ENCODE measurements at regions of chr17 and their contacts with region 1.

Region 1: DNA sequence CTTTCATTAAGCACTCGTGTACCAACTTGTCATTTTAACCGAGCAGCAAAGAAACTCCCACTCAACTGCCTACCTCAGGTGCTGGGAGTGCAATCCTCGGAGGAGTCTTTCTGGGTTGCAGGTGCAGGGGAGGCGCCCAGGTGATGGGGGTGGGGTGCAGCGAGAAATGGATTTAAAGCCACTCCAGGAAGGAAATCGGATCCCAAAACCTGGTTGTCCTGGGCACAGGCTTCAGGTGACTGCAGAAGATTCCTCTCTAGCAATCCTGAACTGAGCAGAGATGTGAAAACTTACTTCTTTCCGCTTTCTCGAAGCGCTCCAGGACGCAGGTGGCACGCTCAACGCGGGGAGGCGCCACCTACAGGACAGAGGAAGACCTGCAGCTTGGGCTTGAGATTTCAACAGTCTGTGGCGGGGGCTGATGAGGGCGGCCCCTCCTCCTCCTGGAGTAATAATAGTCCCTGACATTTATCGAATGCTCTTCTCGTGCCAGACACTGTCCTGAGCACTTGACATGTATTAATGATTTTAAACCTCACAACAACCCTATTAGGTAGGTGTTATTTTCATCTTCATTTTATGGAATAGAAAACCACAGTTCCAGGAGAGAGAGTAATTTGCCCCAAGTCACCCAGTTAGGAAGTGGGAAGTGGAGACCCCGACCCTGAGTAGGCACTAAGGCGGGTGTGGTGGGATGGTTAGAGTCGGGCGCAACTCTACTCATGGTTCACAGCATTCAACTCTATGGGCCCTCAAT is 27.2 kb upstream of the SKAP1 start:
- DNase-seq: peak; percentile 78 to 82 (median 81)
- H3K4me3 ChIP-seq: peak overlapping the region in 1 of 2 donors; percentile 16
- H3K4me3 Mint-ChIP-seq: peak overlapping the region; percentile 64 to 86 (median 76)
- H3K27ac ChIP-seq: no peak overlapping the region
- H3K27ac Mint-ChIP-seq: peak overlapping the region in 5 of 7 donors; percentile 47 to 79 (median 69)
- H3K4me1 ChIP-seq: peaks cover 54% of the 10 kb centered on the region
- H3K4me1 Mint-ChIP-seq: peaks cover 39 to 61% (median 46%) of the 10 kb centered on the region in 4 donors
- H3K27me3 ChIP-seq: no peaks in the 10 kb centered on the region
- H3K27me3 Mint-ChIP-seq: peaks cover 0 to 1% of the 10 kb centered on the region in 2 donors

Region 2: GRCh38 chr17:48335858-48336500 is 121.3 kb before region 1 on chr17:
- CTCF ChIA-PET with region 1: interaction called, 7 read pairs
- POLR2A ChIA-PET with region 1: interaction called, 5 read pairs
- intact Hi-C with region 1: loop called (anchors 1 kb)
- DNase-seq: peak in 4 of 5 donors; percentile 61 to 70 (median 66)
- H3K4me3 ChIP-seq: no peak overlapping the region
- H3K4me3 Mint-ChIP-seq: no peak overlapping the region
- H3K27ac ChIP-seq: no peak overlapping the region
- H3K27ac Mint-ChIP-seq: peak overlapping the region in 2 of 7 donors; percentile 63 to 65
- H3K4me1 ChIP-seq: no peaks in the 10 kb centered on the region
- H3K4me1 Mint-ChIP-seq: peaks cover 0 to 11% (median 4%) of the 10 kb centered on the region in 4 donors
- H3K27me3 ChIP-seq: no peaks in the 10 kb centered on the region
- H3K27me3 Mint-ChIP-seq: no peaks in the 10 kb centered on the region

Region 3: DNA sequence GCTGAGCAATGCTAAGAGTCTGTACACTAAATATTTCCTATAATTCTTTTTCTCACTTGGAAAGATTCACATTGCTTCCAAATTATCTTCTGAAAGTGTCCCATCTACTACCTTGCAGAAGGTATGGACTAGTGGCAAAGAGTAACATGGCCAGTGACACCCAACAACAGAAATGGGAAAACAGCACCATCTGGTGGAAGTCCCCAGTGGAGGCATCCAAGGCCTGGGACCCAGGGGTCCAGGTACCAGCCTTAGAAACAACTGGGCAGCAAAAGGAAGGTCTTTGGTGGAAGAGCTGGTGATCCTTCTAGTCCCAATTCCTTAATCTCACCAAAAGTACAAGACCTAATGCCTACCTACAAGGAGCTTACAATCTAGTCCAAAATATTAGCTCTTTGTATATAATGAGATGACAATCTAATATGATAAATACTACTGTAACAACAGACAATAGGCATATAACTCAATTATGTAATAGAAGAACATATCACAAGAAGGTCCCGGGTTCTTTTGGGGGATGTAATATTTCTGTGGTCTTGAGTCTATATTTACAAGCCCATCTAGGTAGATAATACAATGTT is 82.5 kb before region 1 on chr17:
- CTCF ChIA-PET with region 1: interaction called, 7 read pairs
- POLR2A ChIA-PET with region 1: interaction called, 5 read pairs
- intact Hi-C with region 1: loop called (anchors 2 kb)
- DNase-seq: peak; percentile 3 to 38 (median 21)
- H3K4me3 ChIP-seq: no peak overlapping the region
- H3K4me3 Mint-ChIP-seq: no peak overlapping the region
- H3K27ac ChIP-seq: no peak overlapping the region
- H3K27ac Mint-ChIP-seq: peak overlapping the region in 2 of 7 donors; percentile 9 to 20
- H3K4me1 ChIP-seq: peaks cover 23% of the 10 kb centered on the region
- H3K4me1 Mint-ChIP-seq: peaks cover 24 to 41% (median 33%) of the 10 kb centered on the region in 4 donors
- H3K27me3 ChIP-seq: no peaks in the 10 kb centered on the region
- H3K27me3 Mint-ChIP-seq: no peaks in the 10 kb centered on the region

Region 4: DNA sequence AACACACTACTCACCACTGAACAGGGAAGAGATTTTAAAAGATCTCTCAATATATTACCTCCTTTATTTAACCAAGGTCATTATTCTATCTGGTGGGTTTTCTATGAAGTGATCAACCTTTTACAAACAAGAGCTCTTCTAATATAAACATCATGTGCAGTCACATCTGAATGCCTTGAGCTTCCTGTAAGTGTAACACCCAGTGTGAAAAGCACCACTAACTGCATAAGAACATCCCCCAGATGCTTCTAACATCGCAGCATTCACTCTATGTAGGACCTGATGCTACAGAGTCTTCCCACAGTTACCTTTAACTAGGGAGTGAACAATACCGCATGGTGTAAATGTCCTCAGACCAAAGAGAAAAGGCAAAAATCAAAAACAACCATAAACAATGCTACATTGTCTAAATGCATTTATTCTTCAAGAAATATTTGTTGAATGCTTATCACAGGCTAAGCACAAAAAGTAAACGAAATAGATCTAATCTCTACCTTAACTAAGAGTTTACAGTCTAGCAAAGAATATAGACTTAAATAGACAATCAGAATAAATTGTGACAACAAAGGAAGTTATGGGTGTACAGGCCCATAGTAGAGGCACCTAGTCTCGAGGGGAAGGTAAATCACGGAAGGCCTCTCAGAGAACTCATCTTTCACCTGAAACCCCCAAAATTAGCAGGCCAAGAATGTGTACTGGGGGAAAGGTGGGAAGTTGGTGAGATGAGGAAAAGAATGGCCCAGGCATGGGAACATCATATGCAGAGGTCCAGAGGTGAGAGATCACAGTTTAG is 43.4 kb before region 1 on chr17:
- CTCF ChIA-PET with region 1: interaction called, 12 read pairs
- POLR2A ChIA-PET with region 1: interaction called, 19 read pairs
- intact Hi-C with region 1: loop called (anchors 5 kb)
- DNase-seq: peak in 2 of 5 donors; percentile 19 to 29
- H3K4me3 ChIP-seq: no peak overlapping the region
- H3K4me3 Mint-ChIP-seq: peak overlapping the region; percentile 63 to 85 (median 74)
- H3K27ac ChIP-seq: peak overlapping the region; percentile 48
- H3K27ac Mint-ChIP-seq: peak overlapping the region; percentile 80 to 96 (median 91)
- H3K4me1 ChIP-seq: peaks cover 95% of the 10 kb centered on the region
- H3K4me1 Mint-ChIP-seq: peaks cover 63 to 88% (median 78%) of the 10 kb centered on the region in 4 donors
- H3K27me3 ChIP-seq: no peaks in the 10 kb centered on the region
- H3K27me3 Mint-ChIP-seq: no peaks in the 10 kb centered on the region

Region 5: GRCh38 chr17:48441231-48441711 is 16.0 kb before region 1 on chr17:
- CTCF ChIA-PET with region 1: interaction called, 101 read pairs
- POLR2A ChIA-PET with region 1: interaction called, 186 read pairs
- intact Hi-C with region 1: loop called (anchors 1 kb)
- DNase-seq: peak; percentile 83 to 91 (median 88)
- H3K4me3 ChIP-seq: peak overlapping the region; percentile 8 to 35
- H3K4me3 Mint-ChIP-seq: peak overlapping the region; percentile 56 to 87 (median 82)
- H3K27ac ChIP-seq: peak overlapping the region; percentile 70
- H3K27ac Mint-ChIP-seq: peak overlapping the region; percentile 97 to 100 (median 99)
- H3K4me1 ChIP-seq: peaks cover 98% of the 10 kb centered on the region
- H3K4me1 Mint-ChIP-seq: peaks cover 84 to 97% (median 94%) of the 10 kb centered on the region in 4 donors
- H3K27me3 ChIP-seq: no peaks in the 10 kb centered on the region
- H3K27me3 Mint-ChIP-seq: no peaks in the 10 kb centered on the region